Transverse colon (tissue), 4 donors: ENCODE measurements at regions of chr5 and their contacts with region 1.

Region 1: DNA sequence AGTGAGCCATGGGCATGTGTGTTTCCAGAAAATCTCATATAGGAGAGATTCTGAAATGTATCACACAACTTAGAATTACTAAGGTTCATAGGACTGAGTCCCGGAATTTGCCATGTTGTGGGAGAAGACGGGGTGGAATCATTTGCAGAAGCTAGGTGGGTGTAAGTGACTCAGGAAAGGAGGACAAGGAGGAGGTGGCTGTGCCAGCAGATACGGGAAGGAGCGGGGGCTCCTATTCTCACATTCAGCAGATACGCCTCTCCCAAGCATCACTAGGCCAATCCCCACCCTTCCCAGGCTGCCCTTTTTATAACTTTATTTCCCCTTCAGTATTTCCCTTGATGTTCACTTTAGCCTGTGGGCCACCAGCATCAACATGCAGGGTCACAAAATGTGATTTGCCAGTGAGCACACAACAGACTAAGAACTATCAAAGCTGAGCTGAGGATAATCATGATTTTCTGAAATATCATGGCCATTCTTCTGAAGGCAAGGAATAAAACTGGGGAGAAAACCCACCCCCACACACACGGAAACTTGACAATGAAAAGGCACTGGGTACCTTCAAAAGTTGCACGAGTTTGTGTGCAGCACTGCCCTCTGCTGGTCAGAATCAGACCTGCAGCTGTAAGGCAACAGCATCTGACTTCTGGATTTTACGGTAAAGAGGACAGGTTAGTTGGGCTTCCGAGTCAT is 133.2 kb downstream of the MTX3 start:
- DNase-seq: peak; percentile 77
- H3K4me3 ChIP-seq: no peak overlapping the region
- H3K27ac ChIP-seq: no peak overlapping the region
- H3K4me1 ChIP-seq: no peaks in the 10 kb centered on the region
- H3K27me3 ChIP-seq: peaks cover 5% of the 10 kb centered on the region
- CTCF ChIP-seq: peak; percentile 86 to 97 (median 91)
- EP300 ChIP-seq: no peak
- POLR2A ChIP-seq: no peak

Region 2: GRCh38 chr5:79560771-79561524 is 296.9 kb before region 1 on chr5:
- in situ Hi-C with region 1: loop called in 2 of 4 experiments (anchors 5 to 10 kb)
- intact Hi-C with region 1: no loop called
- DNase-seq: no peak
- H3K4me3 ChIP-seq: no peak overlapping the region
- H3K27ac ChIP-seq: no peak overlapping the region
- H3K4me1 ChIP-seq: peaks cover 0 to 3% (median 0%) of the 10 kb centered on the region in 4 donors
- H3K27me3 ChIP-seq: no peaks in the 10 kb centered on the region
- CTCF ChIP-seq: no peak
- EP300 ChIP-seq: no peak
- POLR2A ChIP-seq: no peak

Region 3: GRCh38 chr5:79689541-79690466 is 168.1 kb before region 1 on chr5 and contains the start of gene CMYA5:
- in situ Hi-C with region 1: no loop called
- intact Hi-C with region 1: loop called (anchors 10 kb)
- DNase-seq: peak; percentile 11
- H3K4me3 ChIP-seq: peak within 1 kb of the TSS; percentile 21 to 41 (median 32)
- H3K27ac ChIP-seq: peak within 1 kb of the TSS; percentile 11 to 60 (median 49)
- H3K4me1 ChIP-seq: peaks cover 0 to 5% (median 0%) of the 10 kb centered on the region in 4 donors
- H3K27me3 ChIP-seq: no peaks in the 10 kb centered on the region
- CTCF ChIP-seq: no peak
- EP300 ChIP-seq: no peak
- POLR2A ChIP-seq: no peak
- total RNA-seq, gene CMYA5: 0.37 to 6.0 (median 3.2) TPM

Region 4: GRCh38 chr5:79762929-79763328 is 94.9 kb before region 1 on chr5:
- in situ Hi-C with region 1: no loop called
- intact Hi-C with region 1: loop called (anchors 5 kb)
- DNase-seq: no peak
- H3K4me3 ChIP-seq: no peak overlapping the region
- H3K27ac ChIP-seq: no peak overlapping the region
- H3K4me1 ChIP-seq: no peaks in the 10 kb centered on the region
- H3K27me3 ChIP-seq: no peaks in the 10 kb centered on the region
- CTCF ChIP-seq: no peak
- EP300 ChIP-seq: no peak
- POLR2A ChIP-seq: no peak

Region 5: GRCh38 chr5:79795790-79796398 is 62.0 kb before region 1 on chr5:
- in situ Hi-C with region 1: no loop called
- intact Hi-C with region 1: loop called (anchors 2 kb)
- DNase-seq: no peak
- H3K4me3 ChIP-seq: no peak overlapping the region
- H3K27ac ChIP-seq: no peak overlapping the region
- H3K4me1 ChIP-seq: peaks cover 0 to 3% (median 0%) of the 10 kb centered on the region in 4 donors
- H3K27me3 ChIP-seq: no peaks in the 10 kb centered on the region
- CTCF ChIP-seq: no peak
- EP300 ChIP-seq: no peak
- POLR2A ChIP-seq: no peak